PC-3 (cell line): ENCODE measurements at regions of chr13 and their contacts with region 1.

Region 1: GRCh38 chr13:24053519-24054251 is 106.8 kb upstream of the SPATA13 start:
- DNase-seq: peak; percentile 91
- ATAC-seq: peak; percentile 89
- H3K4me3 ChIP-seq: 0 out of 2 replicates have a peak overlapping the region, but pooled peaks have one; percentile 0
- H3K27ac ChIP-seq: no peak overlapping the region
- H3K4me1 ChIP-seq: peaks cover 34% of the 10 kb centered on the region
- H3K27me3 ChIP-seq: no peaks in the 10 kb centered on the region
- CTCF ChIP-seq: peak; percentile 87

Region 2: DNA sequence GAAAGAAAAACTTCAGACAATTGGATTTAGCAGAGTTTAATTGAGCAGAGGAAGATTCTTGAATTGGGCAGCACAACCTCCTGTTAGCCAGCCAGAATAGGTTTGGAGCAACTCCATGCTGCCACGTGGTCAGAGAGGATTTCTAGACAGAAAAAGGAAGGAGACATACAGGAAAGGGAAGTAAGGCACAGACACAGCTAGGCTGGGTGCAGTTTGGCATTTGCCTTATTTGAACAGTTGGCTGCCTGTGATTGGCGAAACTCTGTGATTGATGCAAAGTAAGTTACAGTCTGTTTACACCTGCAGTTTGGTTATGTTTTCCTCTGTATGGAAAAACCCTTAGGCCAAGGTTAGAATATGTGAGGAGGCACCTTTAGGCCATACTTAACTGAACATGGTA is 21.0 kb after region 1 on chr13:
- CTCF ChIA-PET with region 1: no interaction called
- POLR2A ChIA-PET with region 1: no interaction called
- intact Hi-C with region 1: loop called (anchors 2 kb)
- DNase-seq: peak; percentile 54
- ATAC-seq: peak; percentile 58
- H3K4me3 ChIP-seq: no peak overlapping the region
- H3K27ac ChIP-seq: peak overlapping the region; percentile 89
- H3K4me1 ChIP-seq: peaks cover 37% of the 10 kb centered on the region
- H3K27me3 ChIP-seq: no peaks in the 10 kb centered on the region
- CTCF ChIP-seq: no peak

Region 3: DNA sequence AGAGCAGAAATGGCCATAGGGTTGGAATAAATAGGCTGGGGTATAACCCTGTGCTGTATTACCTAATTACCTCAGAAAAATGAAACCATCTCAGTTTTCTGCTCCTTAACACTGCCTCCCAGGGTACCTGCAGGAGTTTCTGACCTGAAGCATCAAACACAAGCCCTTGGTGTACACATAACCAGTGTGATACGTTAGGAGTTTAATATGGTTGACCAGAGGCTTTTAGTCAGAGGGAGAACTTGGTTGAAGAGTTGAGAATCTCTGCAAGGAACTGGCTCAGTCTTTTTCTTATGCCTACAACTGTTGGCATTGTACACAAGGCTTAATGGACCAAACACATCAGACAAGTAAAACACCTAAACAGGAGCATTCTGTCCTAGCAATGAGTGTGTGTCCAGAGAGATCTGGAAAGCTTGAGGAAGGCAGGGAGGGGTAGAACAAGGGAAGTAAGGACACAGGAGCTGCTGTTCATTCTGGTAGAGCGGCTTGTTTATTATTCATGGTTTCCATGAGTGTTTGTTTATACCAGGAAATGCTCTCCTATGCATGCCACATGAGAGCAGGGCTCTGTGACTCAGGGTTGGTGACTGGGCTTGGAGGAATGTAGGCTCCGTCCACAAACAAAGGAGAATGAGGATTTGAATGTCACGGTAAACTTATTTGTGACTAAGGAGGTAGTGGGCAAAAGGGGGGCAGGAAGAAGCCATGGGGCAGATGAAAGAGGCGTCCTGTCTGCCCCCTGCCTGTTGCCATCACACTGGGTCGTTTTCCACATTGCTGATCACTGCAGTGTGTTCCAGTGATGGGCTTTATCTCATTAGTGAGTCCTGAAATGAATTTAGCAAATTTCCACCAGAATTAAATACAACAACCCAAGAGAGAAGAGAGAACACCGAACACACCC is 95.0 kb after region 1 on chr13:
- CTCF ChIA-PET with region 1: no interaction called
- POLR2A ChIA-PET with region 1: no interaction called
- intact Hi-C with region 1: loop called (anchors 1 kb)
- DNase-seq: peak; percentile 98
- ATAC-seq: peak; percentile 94
- H3K4me3 ChIP-seq: peak overlapping the region; percentile 28; the same call in 1 of the 2 replicates
- H3K27ac ChIP-seq: peak overlapping the region; percentile 99
- H3K4me1 ChIP-seq: peaks cover 37% of the 10 kb centered on the region
- H3K27me3 ChIP-seq: no peaks in the 10 kb centered on the region
- CTCF ChIP-seq: peak; percentile 51

Region 4: DNA sequence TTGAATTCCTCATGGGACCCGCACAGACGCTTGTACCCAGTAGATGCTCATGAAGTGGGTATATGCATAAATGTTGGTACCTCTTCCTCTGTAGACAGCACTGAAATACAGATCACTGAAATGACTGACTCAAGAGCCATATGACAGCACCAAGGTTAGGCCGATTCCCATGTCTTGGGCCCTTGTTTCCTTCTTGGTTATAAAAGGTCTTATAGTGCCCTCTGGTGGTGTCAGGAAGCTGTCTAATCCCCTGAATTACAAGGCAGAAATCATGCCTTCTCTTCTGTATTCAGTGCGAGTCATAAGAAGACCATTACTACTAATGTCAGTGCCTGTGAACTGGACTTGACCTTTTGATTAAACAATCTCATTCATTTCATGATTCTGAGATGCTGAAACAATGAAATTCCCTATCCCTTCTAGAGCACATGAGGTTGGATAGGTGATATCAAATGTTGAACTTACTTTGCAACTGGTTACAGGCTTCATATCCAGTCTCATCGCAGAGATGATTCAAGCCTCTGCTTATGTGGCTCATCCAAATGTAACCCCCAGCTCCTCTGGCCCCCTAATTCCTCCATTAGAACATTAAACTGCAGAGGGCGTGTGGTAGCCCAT is 166.5 kb after region 1 on chr13:
- CTCF ChIA-PET with region 1: interaction called, 7 read pairs
- POLR2A ChIA-PET with region 1: no interaction called
- intact Hi-C with region 1: loop called (anchors 1 kb)
- DNase-seq: peak; percentile 88
- ATAC-seq: peak; percentile 83
- H3K4me3 ChIP-seq: no peak overlapping the region
- H3K27ac ChIP-seq: peak overlapping the region; percentile 71
- H3K4me1 ChIP-seq: peaks cover 40% of the 10 kb centered on the region
- H3K27me3 ChIP-seq: no peaks in the 10 kb centered on the region
- CTCF ChIP-seq: peak; percentile 86